Cardiac septum (tissue), 1 donor: ENCODE measurements at regions of chr2 and their contacts with region 1.

Region 1: GRCh38 chr2:46187112-46187618 is 110.0 kb upstream of the EPAS1 start:
- DNase-seq: no peak

Region 2: GRCh38 chr2:46097714-46098480 is 89.3 kb before region 1 on chr2:
- intact Hi-C with region 1: loop called (anchors 10 kb)
- DNase-seq: peak; percentile 81

Region 3: GRCh38 chr2:46269544-46270273 is 82.5 kb after region 1 on chr2:
- intact Hi-C with region 1: loop called (anchors 5 kb)
- DNase-seq: no peak

Region 4: DNA sequence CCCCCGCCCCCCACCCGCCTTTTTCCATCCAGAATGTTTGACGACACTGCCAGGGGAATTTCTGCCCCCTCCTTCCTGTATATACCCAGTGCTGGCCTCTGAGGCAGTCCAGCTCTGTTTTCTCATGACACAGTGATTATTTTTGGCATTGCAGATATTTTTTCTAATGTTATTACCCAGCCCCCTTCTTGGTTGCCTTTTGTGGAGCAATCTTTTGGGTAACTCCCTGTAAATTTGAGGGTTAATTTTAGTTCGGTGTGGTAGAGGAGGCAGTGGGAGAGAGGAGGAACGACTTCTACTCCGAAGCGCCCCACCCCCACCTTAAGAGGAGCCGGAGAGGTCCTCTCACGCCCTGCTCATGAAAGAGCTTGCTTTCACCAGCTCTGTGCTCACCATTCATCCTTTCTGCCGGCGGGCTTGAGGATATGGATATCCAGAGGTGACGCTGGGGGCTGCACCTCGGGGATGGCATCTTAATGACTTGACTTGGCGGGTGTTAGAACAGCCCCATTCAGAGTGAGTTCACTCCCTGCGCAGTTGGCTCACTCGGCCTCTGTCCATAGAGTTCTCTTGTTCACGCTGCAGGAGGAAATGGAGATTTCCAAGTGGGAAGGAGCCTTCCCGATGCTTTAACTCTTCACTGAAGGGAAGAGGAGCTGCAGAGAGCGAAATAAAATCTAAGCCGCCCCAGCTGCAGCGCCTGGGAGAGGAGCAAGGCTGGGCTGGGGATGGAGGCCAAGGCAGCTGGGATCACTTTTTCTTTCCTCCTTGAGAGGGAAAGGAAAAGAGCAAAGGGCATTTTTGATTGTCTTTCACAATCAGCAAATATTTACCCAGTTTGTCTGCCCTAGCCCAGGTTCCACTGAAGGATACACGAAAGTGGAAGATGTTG is 148.5 kb after region 1 on chr2:
- intact Hi-C with region 1: no loop called
- DNase-seq: no peak

Region 5: GRCh38 chr2:46460241-46460921 is 273.2 kb after region 1 on chr2:
- intact Hi-C with region 1: no loop called
- DNase-seq: no peak